PC-3 (cell line): ENCODE measurements at regions of chr1 and their contacts with region 1.

Region 1: GRCh38 chr1:166910396-166910994 is 34.4 kb upstream of the TADA1 start:
- DNase-seq: peak; percentile 97
- ATAC-seq: peak; percentile 93
- H3K4me3 ChIP-seq: no peak overlapping the region
- H3K27ac ChIP-seq: no peak overlapping the region
- H3K4me1 ChIP-seq: peaks cover 21% of the 10 kb centered on the region
- H3K27me3 ChIP-seq: no peaks in the 10 kb centered on the region
- CTCF ChIP-seq: peak; percentile 93

Region 2: GRCh38 chr1:166875734-166876539 is 34.6 kb before region 1 on chr1 and contains the start of gene TADA1:
- CTCF ChIA-PET with region 1: interaction called, 10 read pairs
- POLR2A ChIA-PET with region 1: no interaction called
- intact Hi-C with region 1: loop called (anchors 2 kb)
- DNase-seq: peak; percentile 99
- ATAC-seq: peak; percentile 87
- H3K4me3 ChIP-seq: peak within 1 kb of the TSS; percentile 73
- H3K27ac ChIP-seq: peak within 1 kb of the TSS; percentile 78
- H3K4me1 ChIP-seq: 0 out of 2 replicates have a peak, but pooled peaks cover 23% of the 10 kb centered on the region
- H3K27me3 ChIP-seq: no peaks in the 10 kb centered on the region
- CTCF ChIP-seq: no peak
- total RNA-seq, gene TADA1: 12.4 and 15.3 TPM in 2 replicates

Region 3: DNA sequence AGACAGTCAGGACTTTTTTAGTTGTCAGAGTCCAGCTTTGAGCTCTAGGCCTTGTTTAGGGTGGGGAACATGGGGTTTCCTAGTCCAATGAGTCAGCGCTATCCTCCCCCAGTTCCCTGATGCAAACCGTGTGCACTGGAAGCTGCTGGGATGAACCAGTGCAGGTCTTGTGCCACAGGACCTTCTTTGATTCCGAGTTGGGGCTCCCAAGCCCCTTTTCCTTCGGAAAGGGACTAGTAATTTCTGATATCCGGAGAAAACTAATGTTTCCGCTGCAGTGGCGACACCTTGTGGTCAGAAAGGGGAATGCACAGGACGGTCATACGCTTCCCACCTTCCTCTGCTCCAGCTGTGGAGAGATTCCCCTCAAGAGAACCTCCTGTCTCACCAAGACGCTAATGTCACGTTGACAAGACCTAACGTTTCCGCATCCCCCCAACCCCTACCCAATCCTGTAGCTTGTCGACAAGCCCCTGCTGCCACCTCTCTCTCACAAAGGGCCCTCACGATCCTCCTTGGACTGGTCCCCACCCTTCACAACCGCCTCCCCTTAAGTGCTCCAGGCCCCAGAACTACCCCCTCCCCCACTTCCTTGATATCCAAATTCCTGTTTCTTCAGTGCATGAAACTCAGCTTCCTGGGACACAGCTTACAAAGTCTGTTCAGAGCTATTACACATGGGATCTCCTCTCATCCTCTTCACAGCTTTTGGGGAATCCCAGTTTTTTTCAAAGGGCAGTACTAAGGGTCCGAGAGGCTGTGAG is 148.7 kb after region 1 on chr1:
- CTCF ChIA-PET with region 1: interaction called, 117 read pairs
- POLR2A ChIA-PET with region 1: interaction called, 10 read pairs
- intact Hi-C with region 1: loop called (anchors 1 kb)
- DNase-seq: peak; percentile 90
- ATAC-seq: peak; percentile 52
- H3K4me3 ChIP-seq: peak overlapping the region; percentile 28; the same call in 1 of the 2 replicates
- H3K27ac ChIP-seq: no peak overlapping the region
- H3K4me1 ChIP-seq: peaks cover 14% of the 10 kb centered on the region
- H3K27me3 ChIP-seq: no peaks in the 10 kb centered on the region
- CTCF ChIP-seq: peak; percentile 97

Region 4: DNA sequence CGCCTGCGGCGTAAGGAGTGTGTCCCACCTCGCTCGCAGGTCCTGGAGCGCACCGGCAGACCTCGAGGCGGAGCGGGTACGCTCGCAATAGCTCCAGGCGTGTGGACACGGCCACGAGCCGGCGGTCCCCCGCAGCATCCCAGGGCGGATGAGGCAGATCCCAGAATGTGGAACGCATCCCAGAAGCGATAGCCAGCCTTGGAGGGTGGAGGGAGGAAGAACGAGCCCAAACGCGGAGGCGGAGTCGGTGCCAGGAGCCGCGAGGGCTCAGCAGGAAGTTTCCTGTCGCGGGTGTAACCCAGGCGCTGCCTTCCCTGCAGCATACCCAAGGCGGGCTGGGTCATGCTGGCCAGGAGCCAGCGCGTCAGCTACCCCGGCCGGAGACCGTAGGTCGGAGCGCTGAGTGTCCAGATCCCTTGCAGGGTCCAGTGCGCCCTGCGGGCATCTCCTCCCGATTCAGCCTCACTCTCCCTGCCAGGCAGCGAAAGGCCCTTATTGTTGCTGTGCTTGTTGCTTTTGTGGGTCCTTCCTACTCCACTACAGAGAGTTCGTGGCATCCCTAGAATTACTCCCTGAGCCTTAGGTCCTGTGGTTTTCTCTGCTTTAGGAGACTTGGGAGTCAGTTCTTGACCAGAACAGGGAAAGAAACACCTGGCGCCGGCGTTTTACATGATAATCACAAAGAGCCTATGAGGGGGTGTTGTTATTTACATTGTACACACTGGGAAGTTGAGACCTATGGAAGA is 211.1 kb after region 1 on chr1:
- CTCF ChIA-PET with region 1: no interaction called
- POLR2A ChIA-PET with region 1: no interaction called
- intact Hi-C with region 1: loop called (anchors 10 kb)
- DNase-seq: peak; percentile 66
- ATAC-seq: peak; percentile 63
- H3K4me3 ChIP-seq: peak overlapping the region; percentile 68
- H3K27ac ChIP-seq: no peak overlapping the region
- H3K4me1 ChIP-seq: no peaks in the 10 kb centered on the region
- H3K27me3 ChIP-seq: no peaks in the 10 kb centered on the region
- CTCF ChIP-seq: no peak